ENCODE measurements at regions of chr5 and their contacts with region 1.

Region 1: DNA sequence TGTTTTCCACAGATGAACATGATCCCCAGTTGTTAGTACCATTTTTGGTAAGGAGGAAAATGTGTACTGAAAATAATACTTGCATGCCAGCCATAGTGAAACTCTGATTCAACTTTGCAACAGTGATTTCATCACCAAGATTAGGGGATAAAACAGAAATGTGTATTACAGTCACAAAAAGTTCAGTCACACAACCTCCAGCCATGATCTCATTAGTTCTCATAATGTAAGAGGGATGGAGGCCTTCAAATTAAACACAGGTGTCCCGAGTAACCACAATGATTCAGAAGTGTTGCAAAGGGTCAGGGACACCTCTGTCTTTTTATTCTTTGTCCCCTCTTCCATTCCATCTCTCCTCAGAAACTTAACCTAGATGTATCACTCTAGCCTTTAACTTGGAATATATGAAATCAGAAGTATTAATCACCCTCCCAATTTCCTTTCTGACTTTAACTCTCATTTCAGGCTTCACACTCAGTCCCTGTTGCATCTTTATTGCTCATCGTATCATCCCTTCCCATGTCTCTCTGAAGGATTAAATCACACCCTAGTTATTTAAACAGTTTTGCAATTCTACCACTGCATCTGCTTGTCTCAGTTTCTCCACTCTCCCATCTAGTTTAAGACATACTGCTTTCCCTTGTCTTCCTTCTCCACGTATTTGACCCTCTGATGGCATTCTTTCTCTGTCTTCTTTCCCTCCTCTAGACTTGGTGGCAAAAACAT is 291.2 kb downstream of the ADAMTS6 start:
- DNase-seq: peak; percentile 28
- ATAC-seq: peak; percentile 92
- H3K4me3 Mint-ChIP-seq: no peak overlapping the region
- H3K27ac Mint-ChIP-seq: peak overlapping the region; percentile 52
- H3K4me1 Mint-ChIP-seq: peaks cover 21% of the 10 kb centered on the region
- H3K27me3 Mint-ChIP-seq: peaks cover 8% of the 10 kb centered on the region

Region 2: DNA sequence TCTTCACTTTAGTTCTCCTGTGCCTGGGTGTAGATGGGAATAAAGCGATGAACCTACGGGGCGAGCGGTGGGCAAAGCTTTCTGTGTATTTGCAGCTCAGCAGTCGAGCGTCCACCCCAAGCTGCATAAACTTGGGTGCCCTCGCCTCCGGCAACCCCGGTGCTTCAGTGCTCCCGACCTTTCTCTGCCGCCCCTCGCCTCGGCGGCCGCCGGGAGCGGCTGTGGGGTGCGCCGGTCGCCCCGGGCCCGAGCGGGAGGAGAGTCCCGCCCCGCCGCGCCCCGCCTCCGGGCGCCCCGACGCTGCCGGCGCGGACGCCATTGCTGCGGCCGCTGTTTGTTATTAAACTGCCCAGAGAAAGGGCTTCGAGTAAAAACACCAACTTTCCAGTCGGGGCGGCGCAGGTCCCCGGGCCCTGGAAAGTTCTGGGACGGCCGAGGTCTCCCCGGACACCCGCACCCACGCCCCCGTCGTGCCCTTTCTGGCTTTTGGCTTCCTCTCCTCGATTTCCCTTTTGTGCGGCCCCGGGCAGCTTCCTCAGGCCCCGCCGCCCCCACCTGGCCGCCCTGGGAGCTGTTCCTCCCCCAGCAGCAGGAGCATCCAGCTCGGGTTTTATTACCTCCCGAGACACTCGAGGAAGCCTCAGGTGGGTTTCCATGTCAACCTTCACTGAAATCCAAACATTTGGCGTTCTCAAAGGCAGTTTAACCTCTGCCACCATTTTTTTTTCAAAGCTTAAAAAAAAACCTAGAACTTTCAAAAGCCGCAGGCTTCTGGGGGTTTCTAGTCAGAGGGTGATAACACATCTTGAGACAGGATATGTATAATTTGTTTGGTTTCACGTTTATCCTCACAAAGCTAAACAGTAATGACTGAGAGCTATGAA is 87.4 kb before region 1 on chr5:
- CTCF ChIA-PET with region 1: no interaction called
- POLR2A ChIA-PET with region 1: no interaction called
- intact Hi-C with region 1: loop called (anchors 1 kb)
- DNase-seq: peak; percentile 52
- ATAC-seq: peak; percentile 84
- H3K4me3 Mint-ChIP-seq: peak overlapping the region; percentile 66
- H3K27ac Mint-ChIP-seq: peak overlapping the region; percentile 72
- H3K4me1 Mint-ChIP-seq: peaks cover 30% of the 10 kb centered on the region
- H3K27me3 Mint-ChIP-seq: peaks cover 9% of the 10 kb centered on the region

Region 3: GRCh38 chr5:65172486-65173129 is 17.9 kb before region 1 on chr5:
- CTCF ChIA-PET with region 1: interaction called, 3 read pairs
- POLR2A ChIA-PET with region 1: no interaction called
- intact Hi-C with region 1: loop called (anchors 1 kb)
- DNase-seq: peak; percentile 85
- ATAC-seq: peak; percentile 100
- H3K4me3 Mint-ChIP-seq: no peak overlapping the region
- H3K27ac Mint-ChIP-seq: no peak overlapping the region
- H3K4me1 Mint-ChIP-seq: peaks cover 10% of the 10 kb centered on the region
- H3K27me3 Mint-ChIP-seq: peaks cover 21% of the 10 kb centered on the region

Region 4: GRCh38 chr5:65268525-65268924 is 78.0 kb after region 1 on chr5:
- CTCF ChIA-PET with region 1: no interaction called
- POLR2A ChIA-PET with region 1: no interaction called
- intact Hi-C with region 1: no loop called
- DNase-seq: no peak
- ATAC-seq: no peak
- H3K4me3 Mint-ChIP-seq: no peak overlapping the region
- H3K27ac Mint-ChIP-seq: no peak overlapping the region
- H3K4me1 Mint-ChIP-seq: no peaks in the 10 kb centered on the region
- H3K27me3 Mint-ChIP-seq: peaks cover 2% of the 10 kb centered on the region